ENCODE measurements at regions of chr2 and their contacts with region 1.

Region 1: DNA sequence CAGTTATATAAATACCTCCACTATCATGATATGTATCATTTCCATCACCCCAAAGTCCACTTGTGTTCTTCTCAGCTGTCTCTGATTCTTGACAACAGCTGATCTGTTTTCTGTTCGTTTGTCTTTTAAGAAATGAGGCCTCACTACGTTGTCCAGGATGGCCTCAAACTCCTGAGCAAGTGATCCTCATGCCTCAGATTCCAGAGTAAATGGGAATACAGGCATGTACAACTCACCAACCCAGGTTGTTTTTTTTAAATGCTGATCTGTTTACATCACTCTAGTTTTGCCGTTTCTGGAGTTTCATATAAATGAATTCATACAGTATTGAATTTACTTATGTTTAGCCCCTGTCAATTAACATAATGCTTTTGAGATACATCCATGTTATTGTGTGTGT is 38.9 kb upstream of the SP100 start:
- DNase-seq: no peak
- H3K4me3 ChIP-seq: no peak overlapping the region
- CTCF ChIP-seq: no peak

Region 2: DNA sequence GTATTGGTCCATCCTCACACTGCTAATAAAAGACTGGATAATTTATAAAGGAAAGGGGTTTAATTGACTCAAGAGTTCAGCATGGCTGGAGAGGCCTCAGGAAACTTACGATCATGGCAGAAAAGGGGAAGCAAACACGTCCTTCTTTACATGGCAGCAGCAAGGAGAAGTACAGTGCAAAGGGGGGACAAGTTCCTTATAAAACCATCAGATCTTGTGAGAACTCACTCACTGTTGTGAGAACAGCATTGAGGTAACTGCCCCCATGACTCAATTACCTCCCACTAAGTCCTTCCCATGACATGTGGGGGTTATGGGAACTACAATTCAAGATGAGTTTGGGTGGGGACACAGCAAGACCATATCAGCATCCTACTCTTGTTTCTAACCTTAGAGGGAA is 75.9 kb after region 1 on chr2:
- in situ Hi-C with region 1: loop called (anchors 5 kb)
- DNase-seq: no peak
- H3K4me3 ChIP-seq: no peak overlapping the region
- CTCF ChIP-seq: no peak

Measured in astrocyte of the cerebellum (primary cell).